ENCODE measurements at regions of chr12 and their contacts with region 1.

Region 1: DNA sequence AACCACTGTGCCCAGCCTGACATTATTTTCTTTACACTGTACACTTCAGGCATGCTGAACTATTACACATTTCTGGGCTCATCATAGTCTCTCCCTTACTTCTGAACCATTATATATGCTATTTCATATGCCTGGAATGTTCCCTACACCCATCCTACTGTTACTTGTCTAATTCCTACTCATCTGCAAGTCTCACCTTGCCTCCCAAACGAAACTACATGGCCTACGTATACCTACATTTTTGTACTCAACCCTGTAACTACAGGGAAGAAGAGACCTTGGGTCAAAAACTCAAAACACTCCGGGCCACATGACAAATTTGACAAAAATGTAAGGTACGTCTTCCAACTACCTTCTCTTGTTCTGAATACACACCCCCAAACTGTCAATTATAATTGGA is 9.6 kb upstream of the EEA1 start:
- DNase-seq: no peak
- ATAC-seq: no peak
- H3K4me3 Mint-ChIP-seq: no peak overlapping the region
- H3K27ac Mint-ChIP-seq: no peak overlapping the region
- H3K4me1 Mint-ChIP-seq: peaks cover 0 to 5% (median 0%) of the 10 kb centered on the region in 4 donors
- H3K27me3 Mint-ChIP-seq: peaks cover 0 to 4% (median 0%) of the 10 kb centered on the region in 5 donors

Region 2: GRCh38 chr12:92995258-92995903 is 56.7 kb after region 1 on chr12:
- POLR2A ChIA-PET with region 1: interaction called, 10 read pairs
- DNase-seq: no peak
- ATAC-seq: no peak
- H3K4me3 Mint-ChIP-seq: no peak overlapping the region
- H3K27ac Mint-ChIP-seq: no peak overlapping the region
- H3K4me1 Mint-ChIP-seq: peaks cover 0 to 5% (median 0%) of the 10 kb centered on the region in 4 donors
- H3K27me3 Mint-ChIP-seq: peaks cover 0 to 3% (median 0%) of the 10 kb centered on the region in 5 donors